GM12878 (cell line): ENCODE measurements at regions of chr3 and their contacts with region 1.

Region 1: DNA sequence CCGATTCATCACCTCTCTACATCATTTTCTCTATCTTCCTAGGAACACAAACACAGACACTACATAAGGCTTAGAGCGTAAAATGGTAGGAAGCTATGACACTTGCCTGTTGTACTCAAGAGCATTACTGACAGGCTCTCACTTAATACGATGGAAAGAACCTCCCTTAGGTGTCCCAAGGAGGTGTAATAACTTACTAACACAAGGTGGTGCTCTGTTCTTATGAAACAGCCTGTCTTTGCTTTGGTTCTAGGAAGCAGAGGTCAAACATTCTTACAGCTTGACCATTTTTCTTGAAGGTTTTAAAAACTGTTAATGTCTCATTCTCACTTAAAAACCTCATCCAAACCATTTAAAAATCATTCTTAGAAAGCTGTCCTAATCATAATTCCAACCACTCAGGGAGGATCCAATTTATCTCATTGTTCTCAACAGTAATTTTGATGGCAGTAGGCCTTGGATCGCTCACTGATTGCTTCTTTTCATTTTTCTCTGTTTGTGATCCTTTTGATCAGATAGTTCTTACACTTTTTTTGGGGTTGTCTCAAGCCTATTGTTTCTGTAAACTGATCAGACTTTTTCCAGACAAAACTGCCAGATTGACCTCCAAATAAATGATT is 317.8 kb upstream of the AGTR1 start:
- DNase-seq: no peak
- ATAC-seq: peak; percentile 99
- H3K4me3 ChIP-seq: no peak overlapping the region
- H3K27ac ChIP-seq: no peak overlapping the region
- H3K4me1 ChIP-seq: no peaks in the 10 kb centered on the region
- H3K27me3 ChIP-seq: no peaks in the 10 kb centered on the region
- CTCF ChIP-seq: peak in 2 of 3 experiments; percentile 20 to 55; a peak in 3 of 6 replicates
- EP300 ChIP-seq: no peak
- POLR2A ChIP-seq: no peak
- RAD21 ChIP-seq: peak; percentile 57

Region 2: GRCh38 chr3:148131990-148132638 is 247.8 kb before region 1 on chr3:
- CTCF ChIA-PET with region 1: no interaction called
- POLR2A ChIA-PET with region 1: no interaction called
- RAD21 ChIA-PET with region 1: no interaction called
- SMC1A ChIA-PET with region 1: no interaction called
- in situ Hi-C with region 1: no loop called
- intact Hi-C with region 1: no loop called
- DNase-seq: no peak
- ATAC-seq: peak; percentile 36; the same call in 2 of the 3 replicates
- H3K4me3 ChIP-seq: no peak overlapping the region
- H3K27ac ChIP-seq: no peak overlapping the region
- H3K4me1 ChIP-seq: no peaks in the 10 kb centered on the region
- H3K27me3 ChIP-seq: no peaks in the 10 kb centered on the region
- CTCF ChIP-seq: no peak
- EP300 ChIP-seq: no peak
- POLR2A ChIP-seq: no peak
- RAD21 ChIP-seq: no peak

Region 3: DNA sequence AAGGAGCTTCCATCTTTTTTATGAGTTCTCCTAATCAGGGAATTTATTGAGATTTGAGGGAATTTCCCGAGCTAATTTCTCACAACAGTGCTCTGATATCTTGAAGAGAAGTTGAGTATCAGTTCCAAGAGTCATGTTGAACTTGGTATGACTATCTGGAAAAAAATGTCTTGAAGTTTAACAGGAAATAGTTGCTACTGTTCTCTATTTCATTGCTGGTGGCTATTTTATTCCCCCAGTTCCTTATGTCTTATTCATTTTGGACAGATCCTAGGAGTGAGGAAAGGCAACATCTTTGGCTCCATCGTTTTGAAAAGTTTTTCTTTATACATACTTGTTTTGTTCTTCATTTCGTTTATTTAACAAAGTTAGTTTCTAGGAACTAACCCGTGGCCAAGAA is 10.0 kb after region 1 on chr3:
- CTCF ChIA-PET with region 1: interaction called, 8 read pairs
- POLR2A ChIA-PET with region 1: no interaction called
- RAD21 ChIA-PET with region 1: interaction called, 8 read pairs
- SMC1A ChIA-PET with region 1: interaction called, 10 read pairs
- in situ Hi-C with region 1: no loop called
- intact Hi-C with region 1: no loop called
- DNase-seq: no peak
- ATAC-seq: no peak
- H3K4me3 ChIP-seq: no peak overlapping the region
- H3K27ac ChIP-seq: no peak overlapping the region
- H3K4me1 ChIP-seq: no peaks in the 10 kb centered on the region
- H3K27me3 ChIP-seq: no peaks in the 10 kb centered on the region
- CTCF ChIP-seq: no peak
- EP300 ChIP-seq: no peak
- POLR2A ChIP-seq: no peak
- RAD21 ChIP-seq: no peak

Region 4: DNA sequence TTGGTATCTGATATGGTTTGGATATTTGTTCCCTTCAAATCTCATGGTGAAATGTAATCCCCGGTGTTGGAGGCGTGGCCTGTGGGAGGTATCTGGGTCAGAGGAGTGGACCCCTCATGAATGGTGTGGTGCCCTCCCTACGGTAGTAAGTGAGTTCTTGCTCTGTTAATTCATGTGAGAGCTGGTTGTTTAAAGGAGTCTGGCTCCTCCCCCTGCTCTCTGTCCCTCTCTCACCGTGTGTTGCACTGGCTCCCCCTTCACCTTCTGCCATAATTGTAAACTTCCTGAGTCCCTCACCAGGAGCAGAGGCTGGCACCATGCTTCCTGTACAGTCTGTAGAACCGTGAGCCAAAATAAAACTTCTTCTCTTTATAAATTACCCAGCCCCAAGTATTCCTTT is 70.9 kb after region 1 on chr3:
- CTCF ChIA-PET with region 1: no interaction called
- POLR2A ChIA-PET with region 1: no interaction called
- RAD21 ChIA-PET with region 1: no interaction called
- SMC1A ChIA-PET with region 1: interaction called, 11 read pairs
- in situ Hi-C with region 1: no loop called
- intact Hi-C with region 1: loop called (anchors 5 kb)
- DNase-seq: no peak
- ATAC-seq: peak; percentile 29
- H3K4me3 ChIP-seq: no peak overlapping the region
- H3K27ac ChIP-seq: no peak overlapping the region
- H3K4me1 ChIP-seq: no peaks in the 10 kb centered on the region
- H3K27me3 ChIP-seq: no peaks in the 10 kb centered on the region
- CTCF ChIP-seq: no peak
- EP300 ChIP-seq: no peak
- POLR2A ChIP-seq: no peak
- RAD21 ChIP-seq: no peak

Region 5: GRCh38 chr3:148718982-148719862 is 339.3 kb after region 1 on chr3:
- CTCF ChIA-PET with region 1: no interaction called
- POLR2A ChIA-PET with region 1: no interaction called
- RAD21 ChIA-PET with region 1: interaction called, 3 read pairs
- SMC1A ChIA-PET with region 1: interaction called, 4 read pairs
- in situ Hi-C with region 1: no loop called
- intact Hi-C with region 1: loop called (anchors 5 kb)
- DNase-seq: no peak
- ATAC-seq: no peak
- H3K4me3 ChIP-seq: no peak overlapping the region
- H3K27ac ChIP-seq: no peak overlapping the region
- H3K4me1 ChIP-seq: no peaks in the 10 kb centered on the region
- H3K27me3 ChIP-seq: no peaks in the 10 kb centered on the region
- CTCF ChIP-seq: peak in 1 of 3 experiments; percentile 9; a peak in 1 of 6 replicates
- EP300 ChIP-seq: no peak
- POLR2A ChIP-seq: no peak
- RAD21 ChIP-seq: peak; percentile 29; the same call in 1 of the 2 replicates

Region 6: DNA sequence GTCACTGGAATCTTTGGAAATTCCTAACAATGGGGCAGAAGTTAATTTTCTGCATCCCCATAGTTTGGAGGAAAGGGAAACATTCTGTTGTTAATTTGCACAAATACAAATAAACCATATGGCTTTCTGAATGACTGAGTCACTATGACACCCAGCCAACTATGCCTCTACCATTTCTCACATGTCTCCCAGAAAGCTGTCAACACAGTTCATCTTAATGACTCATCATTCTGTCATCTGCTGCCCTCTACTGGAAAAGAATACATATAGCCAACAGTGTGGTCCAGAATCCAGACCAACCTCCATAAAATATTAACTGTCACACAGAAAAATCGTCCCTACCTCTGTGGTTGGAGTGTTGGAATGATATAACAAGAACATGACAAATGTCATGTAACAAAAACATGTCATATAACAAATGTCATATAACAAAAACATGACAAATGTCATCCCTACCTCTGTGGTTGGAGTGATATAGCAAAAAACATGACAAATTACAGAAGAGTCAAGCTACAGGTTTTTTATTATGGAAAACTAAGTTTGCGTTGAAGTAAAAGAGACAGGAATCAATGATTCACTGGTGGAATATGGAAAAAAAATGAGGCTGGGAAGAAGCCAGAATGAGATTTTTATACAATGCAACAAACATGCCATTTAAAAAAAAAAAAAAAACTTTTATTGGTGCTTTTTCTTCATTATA is 563.8 kb after region 1 on chr3:
- CTCF ChIA-PET with region 1: interaction called, 26 read pairs
- POLR2A ChIA-PET with region 1: no interaction called
- RAD21 ChIA-PET with region 1: interaction called, 6 read pairs
- SMC1A ChIA-PET with region 1: interaction called, 11 read pairs
- in situ Hi-C with region 1: loop called (anchors 10 kb)
- intact Hi-C with region 1: loop called (anchors 2 kb)
- DNase-seq: peak; percentile 19
- ATAC-seq: peak; percentile 97
- H3K4me3 ChIP-seq: no peak overlapping the region
- H3K27ac ChIP-seq: no peak overlapping the region
- H3K4me1 ChIP-seq: no peaks in the 10 kb centered on the region
- H3K27me3 ChIP-seq: peaks cover 0 to 3% of the 10 kb centered on the region in 2 experiments; a peak in 3 of 4 replicates
- CTCF ChIP-seq: peak; percentile 69 to 78 (median 75)
- EP300 ChIP-seq: no peak
- POLR2A ChIP-seq: no peak
- RAD21 ChIP-seq: peak; percentile 76